GM13976 (cell line): ENCODE measurements at regions of chr19 and their contacts with region 1.

Region 1: DNA sequence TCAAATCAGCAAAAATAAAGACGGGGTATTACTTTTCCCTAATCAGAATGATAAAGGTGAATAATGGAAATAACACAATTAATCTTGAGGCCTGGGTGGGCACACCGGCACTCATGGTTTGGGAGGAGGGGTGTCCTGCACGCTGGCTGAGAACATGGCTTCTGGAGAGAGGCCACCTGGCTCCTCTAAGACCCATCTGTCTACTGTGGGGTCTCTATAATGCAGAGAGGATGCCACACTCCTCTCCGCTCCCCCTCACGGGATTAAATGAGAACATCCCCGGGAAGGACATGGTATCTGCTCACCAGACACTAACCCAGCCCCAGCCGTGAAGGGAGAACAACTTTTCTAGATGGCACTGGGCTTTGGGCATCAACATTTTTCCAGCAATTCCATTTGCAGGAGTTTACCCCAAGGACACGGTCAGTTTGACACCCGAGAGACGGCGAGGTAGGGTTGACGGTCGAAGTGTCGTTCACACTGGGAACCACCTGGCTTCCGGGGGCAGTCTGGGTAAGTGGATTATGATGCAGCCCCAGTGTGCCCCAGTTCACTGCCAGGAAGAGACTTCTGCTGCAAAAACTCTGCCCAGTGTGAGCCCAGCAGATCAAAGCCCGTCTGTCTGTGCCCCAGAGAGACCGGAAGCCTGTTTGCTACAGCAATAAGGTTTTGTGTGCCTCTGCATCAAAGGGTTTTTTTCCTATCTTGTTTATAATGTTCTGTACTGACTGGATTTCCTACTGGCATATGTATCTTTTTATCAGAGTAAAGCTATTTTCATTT is 56.6 kb downstream of the CEBPG start:
- DNase-seq: no peak
- CTCF ChIP-seq: no peak

Region 2: GRCh38 chr19:33343859-33344572 is 86.1 kb before region 1 on chr19:
- in situ Hi-C with region 1: no loop called
- DNase-seq: no peak
- CTCF ChIP-seq: no peak

Region 3: GRCh38 chr19:33771384-33772101 is 341.5 kb after region 1 on chr19:
- in situ Hi-C with region 1: loop called (anchors 10 kb)
- DNase-seq: peak; percentile 87
- CTCF ChIP-seq: peak; percentile 86